ENCODE measurements at regions of chr11 and their contacts with region 1.

Region 1: DNA sequence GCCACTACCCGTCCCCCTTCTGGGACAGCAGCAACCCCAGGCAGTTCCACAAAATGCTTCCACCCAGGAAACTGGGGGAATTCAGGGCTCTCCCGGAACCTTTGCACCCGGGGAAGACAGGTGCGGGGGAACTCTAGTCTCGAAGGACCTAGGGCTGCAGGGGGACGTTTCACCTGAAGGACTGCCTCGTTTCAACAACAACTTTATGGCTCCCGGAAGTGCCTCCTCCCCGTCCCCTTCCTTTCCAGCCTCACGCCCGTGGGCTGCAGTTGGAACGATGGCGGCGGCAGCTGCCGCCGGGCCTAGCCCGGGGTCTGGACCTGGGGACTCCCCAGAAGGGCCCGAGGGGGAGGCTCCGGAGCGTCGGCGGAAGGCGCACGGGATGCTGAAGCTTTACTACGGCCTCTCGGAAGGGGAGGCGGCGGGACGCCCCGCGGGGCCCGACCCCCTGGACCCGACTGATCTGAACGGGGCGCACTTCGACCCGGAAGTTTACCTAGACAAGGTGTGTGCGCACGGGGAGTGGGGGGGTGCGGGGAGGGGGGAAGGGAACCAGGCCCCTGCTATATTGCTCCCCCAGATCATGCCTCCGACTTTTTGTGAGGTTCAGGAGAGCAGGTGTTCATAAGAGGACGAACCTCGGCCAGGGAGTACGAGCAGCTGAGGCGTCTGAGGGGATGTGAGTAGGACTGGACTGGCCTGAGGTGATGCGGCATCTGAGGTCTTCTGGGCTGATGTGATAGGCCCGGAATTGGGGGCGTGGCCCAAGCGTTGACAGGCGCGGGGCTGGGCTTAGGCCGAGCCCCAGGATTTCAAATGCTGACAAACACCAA is at the start of gene VPS51:
- DNase-seq: peak; percentile 83 to 90
- ATAC-seq: peak; percentile 94 to 96 (median 95)
- H3K4me3 ChIP-seq: peak within 1 kb of the TSS; percentile 75 to 94 (median 86)
- H3K27ac ChIP-seq: peak within 1 kb of the TSS; percentile 67 to 96 (median 93)
- H3K4me1 ChIP-seq: peaks cover 4 to 31% (median 18%) of the 10 kb centered on the region in 9 donors
- H3K27me3 ChIP-seq: no peaks in the 10 kb centered on the region
- CTCF ChIP-seq: no peak
- total RNA-seq, gene VPS51: 79.2 to 123 (median 100) TPM

Region 2: DNA sequence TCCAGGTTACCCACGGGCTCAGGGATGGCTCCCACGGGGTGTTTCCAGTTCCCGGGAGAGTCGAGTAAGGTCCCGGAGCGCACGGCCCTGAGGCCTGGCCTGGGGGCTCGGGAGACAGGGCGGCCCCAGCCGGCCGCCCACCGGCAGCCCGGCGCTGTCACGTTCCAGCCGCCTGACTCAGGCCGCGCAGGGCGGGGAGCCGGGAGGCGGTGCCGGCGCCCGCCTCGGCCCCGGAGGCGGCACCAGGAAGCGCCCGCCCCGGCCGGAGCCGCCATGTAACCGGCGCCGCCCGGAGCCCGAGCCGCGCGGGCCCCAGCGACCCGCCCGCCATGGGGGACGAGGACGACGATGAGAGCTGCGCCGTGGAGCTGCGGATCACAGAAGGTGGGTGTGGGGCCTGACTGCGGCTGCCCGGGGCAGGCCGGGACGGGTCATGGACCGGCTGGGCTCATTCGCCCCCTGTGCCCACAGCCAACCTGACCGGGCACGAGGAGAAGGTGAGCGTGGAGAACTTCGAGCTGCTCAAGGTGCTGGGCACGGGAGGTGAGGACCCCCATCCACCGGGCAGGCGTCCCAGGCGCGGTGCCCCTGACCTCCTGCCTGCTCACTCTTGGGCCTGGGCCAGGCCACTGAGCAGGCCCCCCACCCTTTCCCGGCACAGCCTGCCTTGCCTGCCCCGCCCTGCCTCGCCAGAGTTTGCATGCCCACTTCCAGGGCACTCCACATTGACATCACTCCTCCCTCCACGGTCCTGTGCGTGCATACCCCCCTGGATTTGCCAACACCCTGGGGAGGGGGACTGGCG is 737.1 kb before region 1 on chr11 and contains the start of gene RPS6KA4:
- intact Hi-C with region 1: loop called in 1 of 10 experiments (anchors 5 kb)
- DNase-seq: peak; percentile 51 to 73
- ATAC-seq: peak; percentile 69 to 95 (median 80)
- H3K4me3 ChIP-seq: peak within 1 kb of the TSS; percentile 64 to 99 (median 92)
- H3K27ac ChIP-seq: peak within 1 kb of the TSS; percentile 60 to 97 (median 93)
- H3K4me1 ChIP-seq: peaks cover 8 to 48% (median 36%) of the 10 kb centered on the region in 9 donors
- H3K27me3 ChIP-seq: no peaks in the 10 kb centered on the region
- CTCF ChIP-seq: peak in 1 of 9 donors; percentile 12
- total RNA-seq, gene RPS6KA4: 10.7 to 21.9 (median 12.8) TPM

Region 3: GRCh38 chr11:64960719-64961118 is 135.5 kb before region 1 on chr11:
- intact Hi-C with region 1: no loop called
- DNase-seq: no peak
- ATAC-seq: no peak
- H3K4me3 ChIP-seq: no peak overlapping the region
- H3K27ac ChIP-seq: no peak overlapping the region
- H3K4me1 ChIP-seq: no peaks in the 10 kb centered on the region
- H3K27me3 ChIP-seq: peaks cover 0 to 23% (median 0%) of the 10 kb centered on the region in 7 donors
- CTCF ChIP-seq: no peak

Region 4: GRCh38 chr11:65013692-65014145 is 82.5 kb before region 1 on chr11:
- intact Hi-C with region 1: loop called in 1 of 10 experiments (anchors 5 kb)
- DNase-seq: peak; percentile 94
- ATAC-seq: peak; percentile 93 to 96 (median 96)
- H3K4me3 ChIP-seq: peak overlapping the region; percentile 57 to 92 (median 76)
- H3K27ac ChIP-seq: peak overlapping the region; percentile 87 to 100 (median 98)
- H3K4me1 ChIP-seq: peaks cover 11 to 34% (median 20%) of the 10 kb centered on the region in 9 donors
- H3K27me3 ChIP-seq: no peaks in the 10 kb centered on the region
- CTCF ChIP-seq: peak in 2 of 9 donors; percentile 61 to 63

Region 5: DNA sequence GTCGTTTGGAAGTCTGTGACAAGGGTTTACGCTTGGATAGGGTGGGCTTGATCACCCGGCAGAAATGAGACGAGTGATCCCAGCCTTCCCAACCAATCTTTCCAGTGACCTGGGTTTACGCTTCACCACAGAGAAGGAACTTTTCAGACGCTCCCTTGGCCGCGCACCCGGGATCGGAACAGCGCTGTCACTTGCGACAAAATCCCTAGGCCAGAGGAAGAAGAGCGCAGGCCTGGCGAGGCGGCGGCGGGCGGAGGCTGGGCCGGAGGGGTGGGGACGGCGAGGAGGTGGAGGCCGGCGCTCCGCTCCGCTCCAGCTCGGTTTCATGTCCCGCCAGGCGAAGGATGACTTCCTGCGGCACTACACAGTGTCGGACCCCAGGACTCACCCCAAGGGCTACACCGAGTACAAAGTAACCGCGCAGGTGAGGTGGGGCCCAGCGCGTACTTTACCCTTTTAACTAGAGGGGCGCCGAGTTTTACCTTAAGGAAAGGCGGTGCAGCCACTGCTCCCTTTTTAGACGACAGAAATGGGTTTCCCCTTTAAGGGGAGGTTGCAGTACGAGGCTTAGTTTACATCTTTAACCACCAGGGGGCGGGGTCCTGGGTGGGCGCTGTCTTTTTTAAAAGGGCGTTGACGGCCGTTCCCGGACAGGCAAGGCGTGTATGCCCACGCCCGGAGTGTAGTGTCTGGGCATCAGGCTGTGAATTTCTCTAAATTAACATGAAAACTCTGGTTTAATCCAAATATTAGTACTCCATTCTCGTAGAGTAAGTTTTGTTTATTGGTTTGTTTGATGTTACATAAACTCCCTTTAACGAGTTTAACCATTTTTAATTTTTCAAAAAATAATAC is 68.8 kb before region 1 on chr11 and contains the start of gene SNX15:
- intact Hi-C with region 1: loop called in 1 of 10 experiments (anchors 5 kb)
- DNase-seq: peak; percentile 93 to 96
- ATAC-seq: peak; percentile 98 to 99 (median 99)
- H3K4me3 ChIP-seq: peak within 1 kb of the TSS; percentile 2 to 68 (median 64)
- H3K27ac ChIP-seq: peak within 1 kb of the TSS; percentile 82 to 92 (median 88)
- H3K4me1 ChIP-seq: peaks cover 0 to 22% (median 17%) of the 10 kb centered on the region in 9 donors
- H3K27me3 ChIP-seq: no peaks in the 10 kb centered on the region
- CTCF ChIP-seq: peak; percentile 75 to 92 (median 88)
- total RNA-seq, gene SNX15: 11.4 to 21.8 (median 15.2) TPM

Region 6: GRCh38 chr11:65172600-65172999 is 76.4 kb after region 1 on chr11:
- intact Hi-C with region 1: loop called in 1 of 10 experiments (anchors 2 kb)
- DNase-seq: no peak
- ATAC-seq: peak in 2 of 8 donors; percentile 33 to 61
- H3K4me3 ChIP-seq: no peak overlapping the region
- H3K27ac ChIP-seq: no peak overlapping the region
- H3K4me1 ChIP-seq: peaks cover 0 to 6% (median 0%) of the 10 kb centered on the region in 9 donors
- H3K27me3 ChIP-seq: no peaks in the 10 kb centered on the region
- CTCF ChIP-seq: no peak

Measured in heart right ventricle (tissue), 16 donors.